ENCODE measurements at regions of chr12 and their contacts with region 1.

Region 1: GRCh38 chr12:53746592-53747092 is 5.1 kb downstream of the CISTR start:
- DNase-seq: peak; percentile 82 to 86 (median 84)
- H3K4me3 ChIP-seq: no peak overlapping the region
- H3K4me3 Mint-ChIP-seq: peak overlapping the region in 6 of 8 donors; percentile 48 to 84 (median 70)
- H3K27ac ChIP-seq: no peak overlapping the region
- H3K27ac Mint-ChIP-seq: peak overlapping the region in 1 of 7 donors; percentile 87
- H3K4me1 ChIP-seq: peaks cover 37% of the 10 kb centered on the region
- H3K4me1 Mint-ChIP-seq: peaks cover 8 to 21% (median 18%) of the 10 kb centered on the region in 4 donors
- H3K27me3 ChIP-seq: peaks cover 40% of the 10 kb centered on the region
- H3K27me3 Mint-ChIP-seq: peaks cover 22 to 39% of the 10 kb centered on the region in 2 donors

Region 2: DNA sequence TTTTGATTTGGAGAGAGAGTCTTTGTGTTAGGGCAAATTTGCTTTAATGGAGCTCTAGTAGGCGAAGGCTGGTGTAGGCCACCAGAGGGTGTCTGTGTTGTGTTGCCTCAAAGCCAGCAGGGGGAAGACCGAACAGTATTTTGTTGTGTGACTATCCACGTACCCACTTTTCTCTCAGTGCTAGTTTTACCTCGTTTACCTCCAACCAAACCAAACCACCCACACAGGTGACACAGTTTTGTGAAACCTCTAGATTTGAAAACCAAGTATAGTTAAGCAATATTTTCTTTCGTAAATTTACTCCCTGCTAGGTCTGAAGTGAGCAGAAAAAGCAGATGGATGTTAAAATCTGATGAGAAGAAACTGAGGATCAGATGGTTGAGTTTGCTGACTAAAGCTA is 203.1 kb before region 1 on chr12:
- CTCF ChIA-PET with region 1: interaction called, 12 read pairs
- POLR2A ChIA-PET with region 1: no interaction called
- intact Hi-C with region 1: loop called (anchors 1 kb)
- DNase-seq: peak; percentile 47 to 56 (median 52)
- H3K4me3 ChIP-seq: no peak overlapping the region
- H3K4me3 Mint-ChIP-seq: no peak overlapping the region
- H3K27ac ChIP-seq: no peak overlapping the region
- H3K27ac Mint-ChIP-seq: peak overlapping the region in 6 of 7 donors; percentile 74 to 91 (median 82)
- H3K4me1 ChIP-seq: peaks cover 12% of the 10 kb centered on the region
- H3K4me1 Mint-ChIP-seq: peaks cover 7 to 10% (median 9%) of the 10 kb centered on the region in 4 donors
- H3K27me3 ChIP-seq: no peaks in the 10 kb centered on the region
- H3K27me3 Mint-ChIP-seq: no peaks in the 10 kb centered on the region

Region 3: DNA sequence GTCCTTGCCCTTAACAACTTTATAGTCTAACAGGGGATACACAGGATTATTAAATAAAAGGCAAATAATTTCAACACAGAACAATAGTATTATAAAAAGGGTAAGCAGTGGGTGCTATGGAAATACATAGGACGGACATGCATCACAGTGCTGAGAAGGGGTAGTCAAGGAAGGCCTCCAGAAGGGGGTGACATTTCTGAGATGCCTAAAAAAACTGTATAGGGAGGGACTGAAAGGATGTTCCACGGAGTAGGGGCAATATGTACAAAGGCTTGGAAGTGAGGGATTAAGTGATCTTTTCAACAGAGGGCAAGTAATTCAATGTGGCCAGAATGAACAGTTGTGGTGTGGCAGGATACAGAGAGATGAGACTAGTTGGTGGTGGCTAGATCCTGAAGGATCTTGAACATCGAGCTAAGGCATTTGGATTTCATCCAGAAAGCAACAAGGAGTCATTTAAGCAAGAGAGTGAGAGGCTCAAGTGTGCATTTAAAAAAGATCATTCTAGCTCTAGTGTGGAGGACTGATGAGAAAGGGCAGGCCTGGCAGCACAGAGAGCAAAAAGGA is 61.9 kb before region 1 on chr12:
- CTCF ChIA-PET with region 1: interaction called, 215 read pairs
- POLR2A ChIA-PET with region 1: no interaction called
- intact Hi-C with region 1: no loop called
- DNase-seq: no peak
- H3K4me3 ChIP-seq: no peak overlapping the region
- H3K4me3 Mint-ChIP-seq: no peak overlapping the region
- H3K27ac ChIP-seq: no peak overlapping the region
- H3K27ac Mint-ChIP-seq: no peak overlapping the region
- H3K4me1 ChIP-seq: no peaks in the 10 kb centered on the region
- H3K4me1 Mint-ChIP-seq: no peaks in the 10 kb centered on the region
- H3K27me3 ChIP-seq: no peaks in the 10 kb centered on the region
- H3K27me3 Mint-ChIP-seq: peaks cover 7 to 10% of the 10 kb centered on the region in 2 donors

Region 4: DNA sequence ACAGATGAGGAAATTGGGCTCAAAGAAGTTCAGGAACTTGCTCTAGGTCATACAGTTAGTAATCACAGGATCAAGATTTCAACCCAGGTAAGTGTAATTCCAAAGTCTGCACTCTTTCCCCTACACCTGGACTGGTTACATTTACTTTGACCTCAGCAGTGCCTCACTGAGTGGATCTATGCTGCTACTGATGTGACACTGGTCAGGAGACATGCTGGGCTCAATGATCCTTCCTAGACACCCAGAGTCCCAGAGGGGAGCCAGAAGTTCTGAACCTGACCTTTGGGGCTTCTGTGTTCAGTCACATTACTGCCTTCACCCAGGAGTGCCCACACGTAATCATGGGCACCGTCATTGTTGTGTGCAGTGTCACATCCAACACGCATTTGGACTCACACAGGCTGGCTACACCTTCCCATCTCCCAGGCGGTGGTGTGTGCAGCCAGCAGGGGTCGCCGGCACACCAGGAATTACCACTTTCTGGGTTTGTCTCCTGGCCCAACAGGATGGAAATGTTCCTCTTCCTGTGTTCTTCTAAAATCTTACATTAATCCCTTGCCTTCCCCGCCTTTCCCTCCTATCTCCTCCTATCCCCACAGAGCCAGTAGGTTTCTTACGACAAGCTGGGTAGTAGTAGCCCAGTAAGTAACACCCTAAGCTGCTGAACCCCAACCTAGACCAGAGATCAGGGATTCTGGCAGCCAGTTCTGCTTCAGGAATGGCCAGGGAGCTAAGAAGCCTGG is 45.0 kb before region 1 on chr12:
- CTCF ChIA-PET with region 1: interaction called, 267 read pairs
- POLR2A ChIA-PET with region 1: interaction called, 5 read pairs
- intact Hi-C with region 1: loop called (anchors 1 kb)
- DNase-seq: peak; percentile 65 to 72 (median 69)
- H3K4me3 ChIP-seq: no peak overlapping the region
- H3K4me3 Mint-ChIP-seq: no peak overlapping the region
- H3K27ac ChIP-seq: no peak overlapping the region
- H3K27ac Mint-ChIP-seq: peak overlapping the region in 1 of 7 donors; percentile 10
- H3K4me1 ChIP-seq: peaks cover 4% of the 10 kb centered on the region
- H3K4me1 Mint-ChIP-seq: peaks cover 4 to 12% (median 9%) of the 10 kb centered on the region in 4 donors
- H3K27me3 ChIP-seq: peaks cover 30% of the 10 kb centered on the region
- H3K27me3 Mint-ChIP-seq: peaks cover 54 to 75% of the 10 kb centered on the region in 2 donors

Region 5: DNA sequence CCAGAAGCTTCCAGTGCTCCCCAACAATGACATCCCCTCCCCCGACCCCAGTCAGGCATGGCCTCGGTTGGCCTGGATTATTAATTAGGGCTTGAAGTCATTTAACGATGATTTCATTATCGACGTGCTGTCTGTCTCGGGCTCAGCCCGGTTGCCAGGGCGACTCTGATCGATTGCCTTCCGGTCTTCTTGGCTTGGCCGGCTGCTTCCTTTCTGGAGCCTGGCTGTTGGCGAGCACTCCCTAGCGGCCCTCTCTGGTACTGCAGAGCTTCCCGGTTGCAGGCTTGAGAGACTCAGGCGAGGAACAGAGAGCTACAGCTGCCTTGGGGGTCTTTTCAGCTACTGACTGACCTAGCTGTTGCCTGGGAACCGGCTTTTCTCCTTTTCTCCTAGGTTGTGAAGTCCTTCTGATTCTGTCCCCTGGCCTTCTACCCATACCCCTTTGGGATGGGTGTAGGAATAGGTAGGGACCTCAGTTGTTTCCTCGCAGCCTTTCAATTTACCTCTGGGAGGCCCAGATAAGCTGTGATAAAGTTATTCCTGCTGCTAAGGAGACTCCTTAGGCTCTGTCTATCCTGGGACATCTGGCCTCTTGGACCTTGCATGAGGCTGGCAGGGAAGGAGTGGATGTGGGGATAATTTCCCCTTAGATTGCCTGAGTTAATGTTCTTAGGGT is 10.6 kb after region 1 on chr12:
- CTCF ChIA-PET with region 1: interaction called, 122 read pairs
- POLR2A ChIA-PET with region 1: interaction called, 6 read pairs
- intact Hi-C with region 1: loop called (anchors 1 kb)
- DNase-seq: peak; percentile 67 to 74 (median 71)
- H3K4me3 ChIP-seq: peak overlapping the region in 1 of 2 donors; percentile 12
- H3K4me3 Mint-ChIP-seq: peak overlapping the region; percentile 47 to 75 (median 65)
- H3K27ac ChIP-seq: no peak overlapping the region
- H3K27ac Mint-ChIP-seq: peak overlapping the region in 5 of 7 donors; percentile 39 to 83 (median 65)
- H3K4me1 ChIP-seq: peaks cover 11% of the 10 kb centered on the region
- H3K4me1 Mint-ChIP-seq: peaks cover 2 to 10% (median 8%) of the 10 kb centered on the region in 4 donors
- H3K27me3 ChIP-seq: peaks cover 21% of the 10 kb centered on the region
- H3K27me3 Mint-ChIP-seq: peaks cover 27 to 31% of the 10 kb centered on the region in 2 donors